ENCODE measurements at regions of chr1 and their contacts with region 1.

Region 1: GRCh38 chr1:74468982-74469603 is 43.3 kb downstream of the LRRC53 start:
- DNase-seq: peak; percentile 76
- ATAC-seq: 0 out of 2 replicates have a peak, but pooled peaks have one; percentile 45
- H3K4me3 ChIP-seq: no peak overlapping the region
- H3K27ac ChIP-seq: no peak overlapping the region
- H3K4me1 ChIP-seq: peaks cover 5% of the 10 kb centered on the region; the same call in 1 of the 2 replicates
- H3K27me3 ChIP-seq: peaks cover 37% of the 10 kb centered on the region
- CTCF ChIP-seq: peak; percentile 82

Region 2: DNA sequence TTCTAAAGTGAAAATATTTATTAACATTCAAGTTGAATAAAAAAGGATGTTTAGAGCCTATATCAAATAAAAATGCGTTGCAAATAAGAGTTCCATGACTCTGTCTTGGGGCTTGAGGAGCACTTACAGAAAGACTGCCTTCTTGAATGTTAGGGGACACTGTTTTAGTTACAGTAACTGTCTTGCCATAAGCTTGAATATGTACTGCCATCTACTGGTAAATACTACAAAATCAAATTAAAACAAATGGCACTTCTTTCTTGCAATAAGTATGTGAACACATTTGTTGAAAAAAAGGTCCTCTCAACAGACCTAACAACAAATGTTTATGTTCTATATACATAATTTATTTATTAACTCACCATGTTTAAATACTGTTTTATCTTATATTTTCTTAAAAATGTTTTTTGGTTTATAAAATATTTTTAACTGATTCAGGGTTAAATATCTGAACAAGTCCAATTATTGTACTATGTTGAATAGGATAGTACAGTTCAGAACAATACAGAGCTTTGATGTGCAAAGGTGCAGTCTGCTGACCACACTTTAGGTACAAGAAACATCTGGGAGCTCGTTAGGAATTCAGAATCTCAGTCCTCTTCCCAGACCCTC is 470.6 kb before region 1 on chr1:
- CTCF ChIA-PET with region 1: no interaction called
- POLR2A ChIA-PET with region 1: no interaction called
- intact Hi-C with region 1: loop called (anchors 2 kb)
- DNase-seq: peak; percentile 68
- ATAC-seq: peak; percentile 51
- H3K4me3 ChIP-seq: no peak overlapping the region
- H3K27ac ChIP-seq: no peak overlapping the region
- H3K4me1 ChIP-seq: no peaks in the 10 kb centered on the region
- H3K27me3 ChIP-seq: no peaks in the 10 kb centered on the region
- CTCF ChIP-seq: peak; percentile 66

Region 3: GRCh38 chr1:74412244-74412643 is 56.8 kb before region 1 on chr1:
- CTCF ChIA-PET with region 1: no interaction called
- POLR2A ChIA-PET with region 1: no interaction called
- intact Hi-C with region 1: no loop called
- DNase-seq: no peak
- ATAC-seq: no peak
- H3K4me3 ChIP-seq: no peak overlapping the region
- H3K27ac ChIP-seq: no peak overlapping the region
- H3K4me1 ChIP-seq: no peaks in the 10 kb centered on the region
- H3K27me3 ChIP-seq: peaks cover 22% of the 10 kb centered on the region; the same call in 1 of the 2 replicates
- CTCF ChIP-seq: no peak

Measured in PC-3 (cell line).